Colonic mucosa (tissue), 4 donors: ENCODE measurements at regions of chr4 and their contacts with region 1.

Region 1: GRCh38 chr4:173019711-173020110 is 148.9 kb upstream of the GALNT7 start:
- DNase-seq: no peak
- H3K4me3 ChIP-seq: no peak overlapping the region
- H3K27ac ChIP-seq: no peak overlapping the region
- H3K4me1 ChIP-seq: no peaks in the 10 kb centered on the region
- H3K27me3 ChIP-seq: no peaks in the 10 kb centered on the region
- CTCF ChIP-seq: no peak

Region 2: DNA sequence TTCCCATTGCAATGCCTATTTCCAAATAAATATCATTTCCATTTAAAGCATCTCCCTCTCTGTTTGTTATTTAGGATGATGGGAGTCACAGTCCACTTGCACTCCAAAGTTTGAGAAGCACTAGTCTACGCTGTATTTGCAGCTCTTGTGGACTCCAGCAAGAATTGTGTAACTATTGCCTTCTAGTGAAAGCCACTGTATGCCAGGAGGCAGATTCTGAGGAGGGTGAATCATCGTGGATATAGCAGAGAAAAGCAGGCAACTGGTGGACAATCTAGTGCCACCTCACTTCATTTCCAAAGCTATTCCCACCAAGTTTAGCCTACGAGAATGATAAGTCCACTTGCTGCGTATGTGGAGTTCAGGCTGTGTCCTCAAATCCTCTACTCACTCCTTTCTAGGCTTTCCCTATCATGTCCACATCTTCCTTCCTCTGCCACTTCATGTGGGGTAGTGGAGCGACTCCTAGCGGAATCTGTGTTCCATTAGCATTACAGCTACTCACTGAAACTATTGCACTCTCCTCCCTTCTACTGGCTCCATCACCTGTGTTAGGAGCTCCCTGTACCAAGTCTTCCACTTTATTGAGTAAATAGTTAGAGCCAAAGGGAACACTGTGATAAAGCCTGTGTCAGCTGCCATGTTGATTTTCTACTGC is 352.9 kb before region 1 on chr4:
- intact Hi-C with region 1: no loop called
- DNase-seq: no peak
- H3K4me3 ChIP-seq: no peak overlapping the region
- H3K27ac ChIP-seq: no peak overlapping the region
- H3K4me1 ChIP-seq: no peaks in the 10 kb centered on the region
- H3K27me3 ChIP-seq: no peaks in the 10 kb centered on the region
- CTCF ChIP-seq: no peak

Region 3: GRCh38 chr4:172721659-172722058 is 298.1 kb before region 1 on chr4:
- intact Hi-C with region 1: no loop called
- DNase-seq: no peak
- H3K4me3 ChIP-seq: no peak overlapping the region
- H3K27ac ChIP-seq: no peak overlapping the region
- H3K4me1 ChIP-seq: no peaks in the 10 kb centered on the region
- H3K27me3 ChIP-seq: no peaks in the 10 kb centered on the region
- CTCF ChIP-seq: no peak

Region 4: GRCh38 chr4:173301518-173302201 is 281.9 kb after region 1 on chr4:
- intact Hi-C with region 1: loop called (anchors 5 kb)
- DNase-seq: no peak
- H3K4me3 ChIP-seq: no peak overlapping the region
- H3K27ac ChIP-seq: no peak overlapping the region
- H3K4me1 ChIP-seq: no peaks in the 10 kb centered on the region
- H3K27me3 ChIP-seq: no peaks in the 10 kb centered on the region
- CTCF ChIP-seq: peak; percentile 85

Region 5: DNA sequence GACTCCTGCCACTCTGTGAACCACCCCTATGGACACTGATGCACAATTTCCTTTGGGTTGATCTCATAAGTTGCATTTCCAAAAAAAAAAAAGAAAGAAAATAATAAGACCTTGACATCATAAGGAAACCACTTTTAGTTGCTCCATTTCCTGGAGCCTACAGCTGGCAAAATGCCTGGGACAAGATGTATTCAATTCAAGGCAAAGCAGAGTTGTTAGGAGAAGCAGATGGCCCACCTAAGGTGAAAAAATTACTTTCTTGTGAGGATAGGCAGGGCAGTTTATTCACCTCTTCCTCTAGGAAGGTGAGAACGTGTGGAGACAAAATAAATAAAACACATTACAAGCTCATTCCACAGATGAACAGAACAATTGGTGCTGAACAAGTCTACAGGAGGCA is 393.3 kb after region 1 on chr4:
- intact Hi-C with region 1: loop called (anchors 5 kb)
- DNase-seq: no peak
- H3K4me3 ChIP-seq: no peak overlapping the region
- H3K27ac ChIP-seq: no peak overlapping the region
- H3K4me1 ChIP-seq: no peaks in the 10 kb centered on the region
- H3K27me3 ChIP-seq: no peaks in the 10 kb centered on the region
- CTCF ChIP-seq: no peak